ENCODE measurements at regions of chr3 and their contacts with region 1.

Region 1: GRCh38 chr3:197256836-197257444 is 41.5 kb downstream of the DLG1 start:
- DNase-seq: peak; percentile 60
- H3K4me3 ChIP-seq: no peak overlapping the region
- H3K27ac ChIP-seq: peak overlapping the region; percentile 2
- H3K4me1 ChIP-seq: peaks cover 57% of the 10 kb centered on the region
- H3K27me3 ChIP-seq: no peaks in the 10 kb centered on the region
- CTCF ChIP-seq: peak; percentile 81

Region 2: DNA sequence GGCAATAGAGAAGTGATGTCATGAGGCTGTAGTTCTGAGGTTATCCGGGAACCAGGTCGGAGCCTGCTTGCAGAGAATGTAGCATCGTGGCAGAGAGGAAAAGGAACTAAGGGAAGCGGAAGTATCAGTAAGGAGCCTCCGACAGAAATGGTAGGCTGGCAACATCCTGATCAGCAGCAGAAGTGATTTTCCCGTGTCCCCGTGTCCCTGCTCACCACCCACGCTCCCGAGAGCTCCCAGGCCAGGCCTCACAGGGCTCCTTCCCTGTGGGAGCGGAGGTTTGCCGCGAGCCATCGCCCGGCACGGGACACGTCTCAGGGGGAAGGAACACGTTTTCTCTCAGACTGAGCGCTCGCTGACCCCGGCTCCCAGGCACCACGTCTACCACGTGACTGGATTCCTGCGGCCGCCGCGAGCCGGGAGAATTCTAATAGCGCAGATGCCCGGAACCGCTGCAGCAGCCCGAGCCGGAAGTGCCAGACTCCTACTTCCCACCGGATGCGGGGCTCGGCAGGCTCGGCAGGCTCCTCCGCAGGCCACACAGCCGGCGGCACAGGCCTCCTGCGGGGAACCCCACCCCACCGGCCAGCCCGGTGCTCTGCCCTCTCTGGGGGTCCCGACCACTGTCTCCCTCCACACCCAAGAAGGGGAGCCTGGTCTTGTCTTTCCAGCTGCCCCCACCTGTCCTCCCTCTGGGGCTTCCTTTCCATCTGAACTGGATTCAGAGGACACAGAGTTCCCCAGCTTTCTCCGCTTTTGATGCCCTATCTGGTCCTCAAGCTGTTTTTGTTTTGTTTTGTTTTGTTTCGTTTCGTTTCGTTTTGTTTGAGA is 199.5 kb after region 1 on chr3:
- CTCF ChIA-PET with region 1: no interaction called
- POLR2A ChIA-PET with region 1: no interaction called
- intact Hi-C with region 1: loop called (anchors 5 kb)
- DNase-seq: peak; percentile 91
- H3K4me3 ChIP-seq: peak overlapping the region; percentile 37
- H3K27ac ChIP-seq: peak overlapping the region; percentile 62
- H3K4me1 ChIP-seq: peaks cover 24% of the 10 kb centered on the region
- H3K27me3 ChIP-seq: no peaks in the 10 kb centered on the region
- CTCF ChIP-seq: no peak

Region 3: GRCh38 chr3:197511130-197511529 is 254.2 kb after region 1 on chr3:
- CTCF ChIA-PET with region 1: no interaction called
- POLR2A ChIA-PET with region 1: no interaction called
- intact Hi-C with region 1: loop called (anchors 2 kb)
- DNase-seq: no peak
- H3K4me3 ChIP-seq: no peak overlapping the region
- H3K27ac ChIP-seq: no peak overlapping the region
- H3K4me1 ChIP-seq: peaks cover 28% of the 10 kb centered on the region
- H3K27me3 ChIP-seq: no peaks in the 10 kb centered on the region
- CTCF ChIP-seq: no peak

Measured in A673 (cell line).